ENCODE measurements at regions of chr9 and their contacts with region 1.

Region 1: GRCh38 chr9:129036241-129036922 is at the start of gene MIGA2:
- DNase-seq: peak; percentile 85 to 98 (median 93)
- ATAC-seq: peak; percentile 97
- H3K4me3 Mint-ChIP-seq: peak within 1 kb of the TSS; percentile 89 to 100 (median 96)
- H3K27ac Mint-ChIP-seq: peak within 1 kb of the TSS; percentile 39 to 96 (median 91)
- H3K4me1 Mint-ChIP-seq: peaks cover 19 to 42% (median 35%) of the 10 kb centered on the region in 4 donors
- H3K27me3 Mint-ChIP-seq: no peaks in the 10 kb centered on the region
- polyA plus RNA-seq, gene MIGA2: 5.9 to 11.3 (median 7.2) TPM

Region 2: GRCh38 chr9:128829477-128830251 is 206.7 kb before region 1 on chr9 and contains the start of gene SPOUT1:
- POLR2A ChIA-PET with region 1: no interaction called
- DNase-seq: peak; percentile 87 to 96 (median 92)
- ATAC-seq: peak; percentile 95 to 99
- H3K4me3 Mint-ChIP-seq: peak within 1 kb of the TSS; percentile 84 to 96 (median 94)
- H3K27ac Mint-ChIP-seq: peak within 1 kb of the TSS; percentile 86 to 98 (median 94)
- H3K4me1 Mint-ChIP-seq: peaks cover 11 to 32% (median 26%) of the 10 kb centered on the region in 4 donors
- H3K27me3 Mint-ChIP-seq: no peaks in the 10 kb centered on the region
- polyA plus RNA-seq, gene SPOUT1: 46.7 to 55.6 (median 50.0) TPM

Region 3: GRCh38 chr9:129068990-129069861 is 32.8 kb after region 1 on chr9:
- POLR2A ChIA-PET with region 1: interaction called, 10 read pairs
- DNase-seq: peak; percentile 26 to 87 (median 62)
- ATAC-seq: peak; percentile 95 to 98
- H3K4me3 Mint-ChIP-seq: peak overlapping the region; percentile 58 to 87 (median 74)
- H3K27ac Mint-ChIP-seq: peak overlapping the region; percentile 89 to 96 (median 92)
- H3K4me1 Mint-ChIP-seq: peaks cover 20 to 57% (median 47%) of the 10 kb centered on the region in 4 donors
- H3K27me3 Mint-ChIP-seq: no peaks in the 10 kb centered on the region